AG04449 (cell line): ENCODE measurements at regions of chr4 and their contacts with region 1.

Region 1: DNA sequence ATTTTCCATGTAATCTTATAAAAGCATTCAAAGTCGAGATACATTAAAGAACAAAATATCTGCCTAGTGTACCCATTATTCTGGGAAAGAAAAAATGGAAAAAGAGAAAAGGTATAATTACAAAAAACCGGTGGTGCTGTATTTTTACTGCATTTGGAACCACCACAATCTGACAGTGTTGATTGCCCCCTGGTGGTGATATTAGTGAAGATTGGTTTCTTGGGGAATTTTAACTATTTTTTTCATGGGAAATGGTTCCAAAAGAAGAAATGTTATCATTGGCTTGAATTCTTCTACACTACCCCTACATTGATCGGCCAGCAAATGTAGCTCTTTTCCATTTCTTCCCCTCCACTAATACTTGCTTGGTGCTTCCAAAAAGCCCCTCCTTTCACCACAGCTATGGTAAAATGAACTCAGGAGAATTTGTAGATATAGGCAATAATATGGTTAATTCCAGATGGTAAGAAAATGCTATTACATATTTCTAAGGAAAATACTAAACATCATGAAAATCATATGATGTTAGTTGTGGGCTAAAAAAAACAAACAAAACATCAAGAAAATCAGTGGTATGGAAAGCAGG is 50.0 kb downstream of the COX18 start:
- DNase-seq: no peak
- H3K4me3 ChIP-seq: no peak overlapping the region
- CTCF ChIP-seq: peak; percentile 43

Region 2: GRCh38 chr4:72505314-72505744 is 514.2 kb before region 1 on chr4:
- CTCF ChIA-PET with region 1: interaction called, 33 read pairs
- POLR2A ChIA-PET with region 1: no interaction called
- DNase-seq: peak; percentile 10
- H3K4me3 ChIP-seq: no peak overlapping the region
- CTCF ChIP-seq: peak; percentile 59

Region 3: DNA sequence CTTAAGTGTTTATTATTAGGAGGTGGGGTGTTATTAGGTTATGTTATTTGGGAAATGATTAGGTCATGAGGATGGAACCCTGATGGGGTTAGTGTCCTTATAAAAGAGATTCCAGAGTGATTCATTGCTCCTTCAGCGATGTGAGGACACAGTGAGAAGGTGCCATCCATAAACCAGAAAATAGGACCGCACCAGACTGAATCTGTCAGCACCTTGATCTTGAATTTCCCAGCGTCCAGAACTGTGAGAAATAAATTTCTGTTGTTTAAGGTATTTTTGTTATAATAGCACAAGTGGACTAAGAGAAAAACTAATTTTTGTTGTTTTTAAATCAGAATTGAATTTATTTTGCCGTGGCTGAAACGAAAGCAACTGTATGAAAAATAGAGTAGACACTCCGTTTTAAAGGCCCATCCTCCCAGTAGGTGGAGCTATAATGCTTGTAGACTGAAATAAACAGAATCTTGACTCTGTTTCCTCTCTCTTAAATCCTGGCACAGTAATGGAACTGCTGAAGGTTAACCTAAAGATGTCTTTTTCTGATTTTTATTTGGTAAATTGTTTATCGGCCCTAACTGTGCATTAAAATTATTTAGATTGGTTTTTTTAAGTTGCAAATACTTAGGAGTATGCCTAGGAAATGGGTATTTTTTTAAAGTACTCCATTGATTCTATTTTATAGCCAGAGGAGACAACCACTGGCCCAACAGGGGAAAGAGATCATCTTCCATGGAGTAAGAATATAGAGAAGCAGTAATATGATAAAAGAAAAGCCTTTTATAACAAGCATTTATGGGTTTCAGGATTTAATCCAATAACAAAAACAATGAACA is 317.4 kb before region 1 on chr4:
- CTCF ChIA-PET with region 1: interaction called, 16 read pairs
- POLR2A ChIA-PET with region 1: no interaction called
- DNase-seq: peak; percentile 4
- H3K4me3 ChIP-seq: peak overlapping the region; percentile 49
- CTCF ChIP-seq: peak; percentile 37

Region 4: DNA sequence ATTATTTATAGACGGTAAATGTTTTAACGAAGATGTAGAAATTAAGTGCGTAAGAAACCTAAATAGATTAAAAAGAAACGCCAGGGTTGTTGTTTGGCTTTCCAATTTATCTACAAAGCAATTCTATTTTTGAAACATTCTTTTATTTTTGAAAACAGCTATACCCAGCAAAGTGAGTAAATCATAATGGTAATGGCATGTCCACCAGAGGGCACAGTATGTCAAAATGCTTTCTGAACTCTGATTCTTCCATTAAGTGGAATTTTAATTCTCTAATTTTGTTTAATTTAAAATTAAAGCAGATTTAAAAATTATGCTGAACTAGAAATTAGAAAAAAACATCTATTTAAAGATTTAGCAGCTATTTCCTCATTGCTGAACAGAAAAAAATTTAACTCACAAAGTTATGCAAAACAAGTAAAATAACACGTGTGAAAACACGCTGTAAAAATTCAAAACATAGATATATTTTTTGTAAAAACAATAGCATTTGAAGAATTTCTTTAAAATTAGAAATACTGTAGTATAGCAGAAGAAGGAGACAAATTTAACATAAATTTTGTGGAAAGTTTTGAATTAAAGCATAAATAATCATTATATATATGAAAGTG is 574.2 kb after region 1 on chr4:
- CTCF ChIA-PET with region 1: no interaction called
- POLR2A ChIA-PET with region 1: no interaction called
- DNase-seq: no peak
- H3K4me3 ChIP-seq: no peak overlapping the region
- CTCF ChIP-seq: peak; percentile 36